MCF 10A (cell line): ENCODE measurements at regions of chr5 and their contacts with region 1.

Region 1: GRCh38 chr5:149434162-149435014 is 55.3 kb upstream of the IL17B start:
- DNase-seq: peak; percentile 75
- H3K4me3 Mint-ChIP-seq: no peak overlapping the region
- H3K27ac Mint-ChIP-seq: no peak overlapping the region
- H3K4me1 Mint-ChIP-seq: peaks cover 13% of the 10 kb centered on the region
- H3K27me3 Mint-ChIP-seq: no peaks in the 10 kb centered on the region
- CTCF ChIP-seq: peak; percentile 98

Region 2: GRCh38 chr5:149317281-149318048 is 116.9 kb before region 1 on chr5:
- CTCF ChIA-PET with region 1: interaction called, 225 read pairs
- POLR2A ChIA-PET with region 1: interaction called, 75 read pairs
- intact Hi-C with region 1: loop called (anchors 1 kb)
- DNase-seq: peak; percentile 71
- H3K4me3 Mint-ChIP-seq: no peak overlapping the region
- H3K27ac Mint-ChIP-seq: no peak overlapping the region
- H3K4me1 Mint-ChIP-seq: peaks cover 12% of the 10 kb centered on the region
- H3K27me3 Mint-ChIP-seq: no peaks in the 10 kb centered on the region
- CTCF ChIP-seq: peak; percentile 78

Region 3: GRCh38 chr5:149406203-149406978 is 28.0 kb before region 1 on chr5:
- CTCF ChIA-PET with region 1: interaction called, 40 read pairs
- POLR2A ChIA-PET with region 1: no interaction called
- intact Hi-C with region 1: no loop called
- DNase-seq: no peak
- H3K4me3 Mint-ChIP-seq: no peak overlapping the region
- H3K27ac Mint-ChIP-seq: no peak overlapping the region
- H3K4me1 Mint-ChIP-seq: no peaks in the 10 kb centered on the region
- H3K27me3 Mint-ChIP-seq: peaks cover 11% of the 10 kb centered on the region
- CTCF ChIP-seq: no peak

Region 4: GRCh38 chr5:149448831-149449714 is 14.7 kb after region 1 on chr5:
- CTCF ChIA-PET with region 1: interaction called, 58 read pairs
- POLR2A ChIA-PET with region 1: interaction called, 39 read pairs
- intact Hi-C with region 1: no loop called
- DNase-seq: peak; percentile 54
- H3K4me3 Mint-ChIP-seq: no peak overlapping the region
- H3K27ac Mint-ChIP-seq: peak overlapping the region; percentile 55
- H3K4me1 Mint-ChIP-seq: peaks cover 45% of the 10 kb centered on the region
- H3K27me3 Mint-ChIP-seq: no peaks in the 10 kb centered on the region
- CTCF ChIP-seq: no peak

Region 5: GRCh38 chr5:149567226-149567625 is 132.8 kb after region 1 on chr5:
- CTCF ChIA-PET with region 1: interaction called, 59 read pairs
- POLR2A ChIA-PET with region 1: interaction called, 162 read pairs
- intact Hi-C with region 1: no loop called
- DNase-seq: no peak
- H3K4me3 Mint-ChIP-seq: no peak overlapping the region
- H3K27ac Mint-ChIP-seq: no peak overlapping the region
- H3K4me1 Mint-ChIP-seq: peaks cover 20% of the 10 kb centered on the region
- H3K27me3 Mint-ChIP-seq: no peaks in the 10 kb centered on the region
- CTCF ChIP-seq: no peak

Region 6: GRCh38 chr5:149618581-149619251 is 184.3 kb after region 1 on chr5:
- CTCF ChIA-PET with region 1: interaction called, 15 read pairs
- POLR2A ChIA-PET with region 1: interaction called, 10 read pairs
- intact Hi-C with region 1: no loop called
- DNase-seq: peak; percentile 86
- H3K4me3 Mint-ChIP-seq: no peak overlapping the region
- H3K27ac Mint-ChIP-seq: peak overlapping the region; percentile 28
- H3K4me1 Mint-ChIP-seq: peaks cover 16% of the 10 kb centered on the region
- H3K27me3 Mint-ChIP-seq: no peaks in the 10 kb centered on the region
- CTCF ChIP-seq: peak; percentile 92